OCI-LY7 (cell line): ENCODE measurements at regions of chr7 and their contacts with region 1.

Region 1: DNA sequence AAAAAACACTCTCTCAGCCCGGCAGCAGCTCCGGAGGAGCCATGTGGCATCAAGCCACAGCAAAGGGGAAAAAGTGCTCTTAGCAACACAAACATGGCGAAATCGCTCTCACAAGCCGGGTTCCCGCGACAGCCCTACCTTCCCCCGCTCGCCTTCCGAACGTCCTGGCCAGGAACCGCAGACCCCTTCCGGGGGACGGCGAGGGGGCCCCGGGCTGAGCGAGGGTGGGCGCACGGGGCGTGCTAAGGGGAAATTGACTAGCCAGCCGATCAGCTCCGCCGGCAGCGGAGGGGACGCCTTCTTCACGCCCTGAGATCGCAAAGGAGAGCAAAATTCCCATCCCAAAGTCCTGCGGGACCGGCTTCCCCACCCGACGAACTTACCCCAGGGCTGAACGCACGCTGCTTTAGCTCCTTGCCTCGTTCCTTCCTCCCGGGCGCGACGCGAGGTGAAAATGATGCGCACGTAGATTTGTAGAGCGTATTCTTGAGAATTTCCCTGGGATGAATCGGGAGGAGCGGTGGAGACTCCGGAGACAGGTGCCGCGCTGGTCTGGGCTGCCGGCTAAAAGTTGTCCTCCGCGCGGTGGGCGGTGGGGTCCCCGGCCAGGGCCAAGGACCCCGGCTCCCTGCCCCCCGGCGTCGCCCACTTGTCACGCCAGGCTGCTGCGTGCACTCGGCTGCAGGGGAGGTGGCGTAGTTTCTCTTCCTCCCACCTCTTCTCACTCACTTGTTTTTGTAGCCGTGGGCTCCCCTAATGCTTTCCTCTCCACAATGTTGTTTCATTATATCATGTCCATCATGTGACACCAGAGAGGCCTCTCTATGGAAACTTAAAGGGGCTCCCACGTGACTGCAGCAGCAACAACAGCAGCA is 220.1 kb upstream of the MKLN1 start:
- DNase-seq: peak; percentile 79
- H3K4me3 ChIP-seq: peak overlapping the region; percentile 85
- H3K27ac ChIP-seq: peak overlapping the region; percentile 85
- H3K4me1 ChIP-seq: peaks cover 37% of the 10 kb centered on the region
- CTCF ChIP-seq: no peak

Region 2: DNA sequence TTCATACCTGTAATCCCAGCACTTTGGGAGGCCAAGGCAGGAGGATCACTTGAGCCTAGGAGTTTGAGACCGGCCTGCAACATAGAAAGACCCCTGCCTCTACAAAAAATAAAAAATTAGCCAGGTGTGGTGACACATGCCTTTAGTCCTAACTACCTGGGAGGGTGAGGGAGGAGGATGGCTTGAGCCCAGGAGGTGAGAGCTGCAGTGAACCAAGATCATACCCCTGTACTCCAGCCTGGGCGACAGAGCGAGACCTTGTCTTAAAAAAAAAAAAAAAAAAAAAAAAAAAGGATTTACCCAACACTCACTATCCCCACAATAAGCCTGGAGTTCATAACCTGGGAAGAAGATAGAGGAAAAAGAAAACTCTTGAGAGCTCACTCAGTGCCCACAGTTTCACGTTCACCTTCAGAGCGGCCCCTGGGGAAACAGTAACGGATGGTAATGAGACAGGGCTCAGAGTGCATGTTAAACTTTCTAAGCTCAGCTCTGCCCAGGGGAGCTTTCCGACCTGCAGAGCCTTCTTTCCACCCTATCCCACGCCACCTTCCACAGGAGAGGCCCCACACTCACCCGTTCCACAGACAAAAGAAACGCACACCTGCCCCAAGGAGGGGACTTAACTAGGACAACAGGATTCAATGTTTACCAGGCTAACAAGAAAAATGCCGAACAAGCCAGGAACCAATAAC is 113.8 kb before region 1 on chr7:
- CTCF ChIA-PET with region 1: no interaction called
- POLR2A ChIA-PET with region 1: interaction called, 10 read pairs
- intact Hi-C with region 1: no loop called
- DNase-seq: no peak
- H3K4me3 ChIP-seq: no peak overlapping the region
- H3K27ac ChIP-seq: no peak overlapping the region
- H3K4me1 ChIP-seq: no peaks in the 10 kb centered on the region
- CTCF ChIP-seq: no peak

Region 3: GRCh38 chr7:131124001-131124629 is 16.5 kb after region 1 on chr7:
- CTCF ChIA-PET with region 1: interaction called, 7 read pairs
- POLR2A ChIA-PET with region 1: interaction called, 186 read pairs
- intact Hi-C with region 1: loop called (anchors 1 kb)
- DNase-seq: peak; percentile 96
- H3K4me3 ChIP-seq: peak overlapping the region; percentile 38
- H3K27ac ChIP-seq: peak overlapping the region; percentile 100
- H3K4me1 ChIP-seq: peaks cover 51% of the 10 kb centered on the region
- CTCF ChIP-seq: no peak

Region 4: GRCh38 chr7:131188367-131189339 is 81.1 kb after region 1 on chr7:
- CTCF ChIA-PET with region 1: no interaction called
- POLR2A ChIA-PET with region 1: no interaction called
- intact Hi-C with region 1: no loop called
- DNase-seq: no peak
- H3K4me3 ChIP-seq: no peak overlapping the region
- H3K27ac ChIP-seq: no peak overlapping the region
- H3K4me1 ChIP-seq: peaks cover 6% of the 10 kb centered on the region
- CTCF ChIP-seq: no peak

Region 5: GRCh38 chr7:131302876-131303707 is 195.5 kb after region 1 on chr7:
- CTCF ChIA-PET with region 1: no interaction called
- POLR2A ChIA-PET with region 1: interaction called, 5 read pairs
- intact Hi-C with region 1: loop called (anchors 1 kb)
- DNase-seq: peak; percentile 37
- H3K4me3 ChIP-seq: no peak overlapping the region
- H3K27ac ChIP-seq: no peak overlapping the region
- H3K4me1 ChIP-seq: peaks cover 6% of the 10 kb centered on the region
- CTCF ChIP-seq: peak; percentile 74

Region 6: DNA sequence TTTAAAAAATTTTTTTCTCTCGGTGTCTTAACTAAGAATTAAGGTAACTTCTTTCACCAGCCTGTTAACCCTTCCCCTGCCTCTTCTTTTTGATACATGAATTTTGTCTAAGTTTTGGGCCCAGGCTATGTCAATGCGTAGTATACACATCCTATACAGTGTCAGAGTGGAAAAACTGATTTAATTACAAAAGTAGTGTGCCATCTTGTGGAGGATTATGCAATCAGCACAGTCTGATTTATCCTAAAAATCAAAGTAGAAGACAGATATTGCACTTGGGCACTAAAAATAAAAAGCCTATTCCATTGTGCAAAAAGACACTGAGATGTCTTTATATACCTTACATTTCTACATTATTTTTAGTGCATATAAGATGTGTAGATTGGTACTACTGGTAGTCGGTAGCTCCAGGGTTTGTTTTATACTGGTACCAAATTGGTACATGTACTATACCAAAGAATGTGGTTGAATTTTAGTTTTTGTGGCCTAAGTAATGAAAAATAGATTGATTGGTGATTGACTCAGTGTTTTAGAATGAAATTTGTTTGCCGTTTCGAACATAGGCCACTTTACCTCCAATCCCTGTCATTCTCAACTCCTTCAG is 316.7 kb after region 1 on chr7:
- CTCF ChIA-PET with region 1: no interaction called
- POLR2A ChIA-PET with region 1: no interaction called
- intact Hi-C with region 1: loop called (anchors 2 kb)
- DNase-seq: peak; percentile 64
- H3K4me3 ChIP-seq: no peak overlapping the region
- H3K27ac ChIP-seq: no peak overlapping the region
- H3K4me1 ChIP-seq: peaks cover 7% of the 10 kb centered on the region
- CTCF ChIP-seq: peak; percentile 79